HCT116 (cell line): ENCODE measurements at regions of chr4 and their contacts with region 1.

Region 1: DNA sequence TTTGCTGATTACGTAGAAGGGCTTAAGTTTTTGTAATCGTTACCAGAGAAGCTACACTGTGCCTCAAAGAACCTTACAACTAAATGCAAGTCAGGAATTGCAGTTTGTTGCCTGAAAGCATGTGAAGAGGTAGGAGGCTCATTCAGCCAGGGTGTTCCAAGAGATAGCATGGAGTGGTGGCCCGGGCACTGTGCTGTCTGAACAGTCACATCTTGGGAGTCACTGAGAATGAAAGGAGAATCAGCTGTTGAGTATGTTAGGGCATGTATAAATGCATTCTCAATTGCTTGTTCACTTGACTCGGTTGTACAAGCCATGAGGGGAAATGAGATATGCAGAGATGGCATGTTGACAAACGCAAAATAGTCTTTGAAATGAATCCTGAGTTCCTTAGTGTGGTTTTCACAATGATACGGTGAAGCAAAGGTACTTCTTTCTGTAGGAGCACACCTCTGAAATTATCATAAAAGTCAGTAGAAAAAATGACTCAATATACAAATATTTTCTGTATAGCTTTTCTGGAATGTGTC is 161.0 kb downstream of the DCTD start:
- DNase-seq: no peak
- ATAC-seq: no peak
- H3K4me3 ChIP-seq: no peak overlapping the region
- H3K27ac ChIP-seq: no peak overlapping the region
- H3K4me1 ChIP-seq: no peaks in the 10 kb centered on the region
- H3K27me3 ChIP-seq: peaks cover 28% of the 10 kb centered on the region; the same call in 1 of the 2 replicates
- CTCF ChIP-seq: no peak
- POLR2A ChIP-seq: no peak
- RAD21 ChIP-seq: no peak

Region 2: DNA sequence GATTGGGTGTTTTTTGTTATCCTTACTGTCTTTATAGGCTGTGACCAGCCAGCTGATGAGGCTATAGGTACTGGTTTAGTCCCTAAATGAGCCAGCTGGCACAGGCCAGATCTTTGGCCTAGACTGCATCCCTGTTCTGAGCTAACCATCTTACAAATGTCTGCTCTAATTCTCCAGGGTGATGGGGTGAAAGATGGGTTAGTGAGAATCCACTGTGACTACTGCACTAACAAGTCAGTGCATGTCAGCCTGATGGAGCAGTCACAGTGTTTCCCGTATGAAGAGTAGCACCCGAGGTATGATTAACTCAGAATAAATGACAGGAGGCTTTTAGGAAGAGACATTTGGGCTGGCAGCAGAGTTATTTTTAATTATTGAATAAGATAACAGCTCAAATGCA is 20.0 kb before region 1 on chr4:
- CTCF ChIA-PET with region 1: no interaction called
- POLR2A ChIA-PET with region 1: no interaction called
- RAD21 ChIA-PET with region 1: no interaction called
- intact Hi-C with region 1: loop called (anchors 1 kb)
- DNase-seq: no peak
- ATAC-seq: no peak
- H3K4me3 ChIP-seq: no peak overlapping the region
- H3K27ac ChIP-seq: no peak overlapping the region
- H3K4me1 ChIP-seq: no peaks in the 10 kb centered on the region
- H3K27me3 ChIP-seq: peaks cover 15% of the 10 kb centered on the region
- CTCF ChIP-seq: no peak
- POLR2A ChIP-seq: no peak
- RAD21 ChIP-seq: no peak

Region 3: GRCh38 chr4:182776376-182777110 is 20.3 kb after region 1 on chr4:
- CTCF ChIA-PET with region 1: no interaction called
- POLR2A ChIA-PET with region 1: no interaction called
- RAD21 ChIA-PET with region 1: no interaction called
- intact Hi-C with region 1: loop called (anchors 1 kb)
- DNase-seq: no peak
- ATAC-seq: no peak
- H3K4me3 ChIP-seq: no peak overlapping the region
- H3K27ac ChIP-seq: no peak overlapping the region
- H3K4me1 ChIP-seq: no peaks in the 10 kb centered on the region
- H3K27me3 ChIP-seq: peaks cover 36% of the 10 kb centered on the region
- CTCF ChIP-seq: no peak
- POLR2A ChIP-seq: no peak
- RAD21 ChIP-seq: no peak